Sciatic nerve (tissue), 2 donors: ENCODE measurements at regions of chrX and their contacts with region 1.

Region 1: DNA sequence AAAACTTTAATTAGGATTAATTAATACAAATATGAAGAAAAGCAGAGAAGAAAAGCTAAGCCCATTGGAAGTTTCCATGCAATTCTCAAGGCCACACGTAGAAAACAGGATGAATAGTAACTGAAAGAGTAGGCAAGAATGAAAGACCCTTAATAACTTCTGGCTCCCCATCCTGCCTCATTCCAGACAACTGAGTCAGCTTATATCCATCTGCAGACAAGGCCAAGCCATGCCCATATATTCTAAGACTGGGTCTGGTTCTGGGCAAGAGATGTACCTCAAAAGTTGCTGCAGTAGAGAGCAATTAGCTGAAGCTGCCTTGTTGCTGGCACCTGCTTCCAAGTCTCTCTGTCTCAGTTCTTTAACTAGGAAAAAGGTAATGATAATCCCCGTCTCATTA is 244.1 kb downstream of the GPC3 start:
- DNase-seq: no peak
- ATAC-seq: no peak

Region 2: DNA sequence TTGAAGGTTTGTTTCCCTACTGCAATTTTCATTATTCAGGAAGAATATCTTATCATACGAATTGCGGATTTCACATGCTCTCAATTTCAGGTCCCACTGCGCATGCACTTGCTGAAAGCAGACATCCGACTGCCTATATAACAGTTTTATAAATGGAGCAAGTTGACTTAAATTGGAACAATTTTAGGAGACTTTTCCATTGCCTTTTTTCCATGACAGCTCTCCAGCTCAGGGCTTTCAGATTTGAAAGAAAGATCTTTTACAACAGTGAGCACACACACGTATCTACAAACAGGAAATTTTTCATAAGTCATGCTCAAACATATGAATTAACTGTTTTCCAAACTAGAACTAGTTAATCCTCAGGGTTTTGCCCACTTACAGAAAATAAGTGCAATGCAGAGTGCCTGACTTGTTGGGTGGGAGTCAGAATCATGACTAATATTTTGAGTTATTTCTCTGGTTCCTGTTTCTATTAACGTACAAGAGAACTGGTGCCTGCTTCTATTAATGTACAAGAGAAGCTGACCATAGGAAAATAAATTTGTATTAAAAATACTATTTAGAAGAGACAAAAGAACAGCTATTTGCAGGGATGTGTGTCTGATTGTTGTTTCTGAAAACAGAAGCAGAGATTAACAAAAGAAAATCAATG is 106.2 kb after region 1 on chrX:
- intact Hi-C with region 1: loop called (anchors 5 kb)
- DNase-seq: no peak
- ATAC-seq: no peak